ENCODE measurements at regions of chr2 and their contacts with region 1.

Region 1: GRCh38 chr2:200811336-200812121 is at the start of gene BZW1:
- DNase-seq: peak; percentile 95
- H3K4me3 ChIP-seq: peak within 1 kb of the TSS; percentile 46 to 96 (median 86)
- H3K27ac ChIP-seq: peak within 1 kb of the TSS; percentile 94
- H3K4me1 ChIP-seq: peaks cover 25% of the 10 kb centered on the region
- H3K27me3 ChIP-seq: no peaks in the 10 kb centered on the region
- CTCF ChIP-seq: no peak
- total RNA-seq, gene BZW1: 350 to 501 TPM

Region 2: GRCh38 chr2:200735061-200735460 is 76.5 kb before region 1 on chr2:
- CTCF ChIA-PET with region 1: no interaction called
- dilution Hi-C with region 1: no loop called
- in situ Hi-C with region 1: no loop called
- intact Hi-C with region 1: loop called (anchors 1 kb)
- DNase-seq: no peak
- H3K4me3 ChIP-seq: no peak overlapping the region
- H3K27ac ChIP-seq: no peak overlapping the region
- H3K4me1 ChIP-seq: peaks cover 3% of the 10 kb centered on the region
- H3K27me3 ChIP-seq: no peaks in the 10 kb centered on the region
- CTCF ChIP-seq: no peak

Region 3: GRCh38 chr2:200756618-200757321 is 54.8 kb before region 1 on chr2:
- CTCF ChIA-PET with region 1: no interaction called
- dilution Hi-C with region 1: no loop called
- in situ Hi-C with region 1: no loop called
- intact Hi-C with region 1: loop called (anchors 1 kb)
- DNase-seq: peak; percentile 93
- H3K4me3 ChIP-seq: no peak overlapping the region
- H3K27ac ChIP-seq: peak overlapping the region; percentile 58
- H3K4me1 ChIP-seq: peaks cover 53% of the 10 kb centered on the region
- H3K27me3 ChIP-seq: no peaks in the 10 kb centered on the region
- CTCF ChIP-seq: no peak

Region 4: GRCh38 chr2:200765139-200765951 is 46.2 kb before region 1 on chr2:
- CTCF ChIA-PET with region 1: no interaction called
- dilution Hi-C with region 1: no loop called
- in situ Hi-C with region 1: no loop called
- intact Hi-C with region 1: loop called (anchors 1 kb)
- DNase-seq: peak; percentile 94
- H3K4me3 ChIP-seq: no peak overlapping the region
- H3K27ac ChIP-seq: peak overlapping the region; percentile 83
- H3K4me1 ChIP-seq: peaks cover 59% of the 10 kb centered on the region
- H3K27me3 ChIP-seq: no peaks in the 10 kb centered on the region
- CTCF ChIP-seq: no peak

Region 5: GRCh38 chr2:200787348-200788120 is 24.0 kb before region 1 on chr2:
- CTCF ChIA-PET with region 1: no interaction called
- dilution Hi-C with region 1: no loop called
- in situ Hi-C with region 1: no loop called
- intact Hi-C with region 1: loop called (anchors 1 kb)
- DNase-seq: peak; percentile 96
- H3K4me3 ChIP-seq: peak overlapping the region in 1 of 3 experiments; percentile 8
- H3K27ac ChIP-seq: peak overlapping the region; percentile 94
- H3K4me1 ChIP-seq: peaks cover 44% of the 10 kb centered on the region
- H3K27me3 ChIP-seq: no peaks in the 10 kb centered on the region
- CTCF ChIP-seq: no peak

Region 6: GRCh38 chr2:200864176-200864976 is 52.8 kb after region 1 on chr2 and contains the start of gene CLK1:
- CTCF ChIA-PET with region 1: no interaction called
- dilution Hi-C with region 1: no loop called
- in situ Hi-C with region 1: no loop called
- intact Hi-C with region 1: loop called (anchors 2 kb)
- DNase-seq: peak; percentile 92
- H3K4me3 ChIP-seq: peak within 1 kb of the TSS; percentile 82 to 100 (median 99)
- H3K27ac ChIP-seq: peak within 1 kb of the TSS; percentile 99
- H3K4me1 ChIP-seq: peaks cover 22% of the 10 kb centered on the region
- H3K27me3 ChIP-seq: no peaks in the 10 kb centered on the region
- CTCF ChIP-seq: no peak
- total RNA-seq, gene CLK1: 55.0 to 55.2 TPM

Region 7: DNA sequence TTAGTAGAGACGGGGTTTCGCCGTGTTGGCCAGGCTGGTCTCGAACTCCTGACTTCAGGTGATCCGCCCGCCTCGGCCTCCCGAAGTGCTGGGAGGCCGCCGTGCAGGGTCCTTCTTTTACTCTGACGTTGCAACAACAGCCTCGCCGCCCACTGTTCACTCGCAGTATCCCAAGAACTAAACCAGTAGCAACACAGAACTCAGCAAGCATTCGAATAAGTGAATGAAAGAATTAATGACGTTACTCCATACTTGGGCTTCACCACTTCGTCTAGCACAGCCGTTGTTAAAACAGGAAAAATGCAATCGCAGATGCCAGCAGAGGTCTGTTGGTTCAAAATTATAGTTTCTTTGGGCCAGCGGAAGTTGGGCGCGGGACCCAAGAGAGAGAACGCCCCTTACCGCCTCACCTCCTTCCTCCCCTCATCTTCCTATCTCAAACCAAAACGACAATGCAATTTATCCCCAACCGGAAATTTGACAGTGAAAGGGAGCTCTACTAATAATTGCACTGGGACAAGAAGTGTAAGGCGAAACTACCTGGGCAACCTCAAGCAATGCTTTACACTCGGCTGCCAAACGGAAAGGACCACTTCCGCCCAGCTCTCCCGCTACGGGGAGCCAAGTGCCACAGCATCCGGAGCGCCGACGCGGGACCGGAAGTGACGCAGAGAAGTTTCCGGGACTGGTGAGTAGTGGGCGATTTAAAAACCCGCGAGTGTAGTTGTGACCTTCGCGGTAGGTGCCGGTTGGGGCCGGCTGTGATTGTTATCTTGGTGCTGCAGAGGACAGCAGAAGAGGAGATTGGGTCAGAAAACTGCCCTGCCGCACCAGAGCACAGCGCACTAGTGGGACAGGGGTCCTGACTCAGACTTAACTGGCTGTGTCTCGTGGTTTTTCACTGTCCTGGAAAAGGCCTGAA is 77.4 kb after region 1 on chr2 and contains the starts of genes NIF3L1 and PPIL3:
- CTCF ChIA-PET with region 1: no interaction called
- dilution Hi-C with region 1: no loop called
- in situ Hi-C with region 1: no loop called
- intact Hi-C with region 1: loop called (anchors 1 kb)
- DNase-seq: peak; percentile 98
- H3K4me3 ChIP-seq: peak within 1 kb of the TSS; percentile 77 to 97 (median 85)
- H3K27ac ChIP-seq: peak within 1 kb of the TSS; percentile 92
- H3K4me1 ChIP-seq: peaks cover 5% of the 10 kb centered on the region
- H3K27me3 ChIP-seq: no peaks in the 10 kb centered on the region
- CTCF ChIP-seq: no peak
- total RNA-seq, gene NIF3L1: 18.0 to 23.2 TPM
- total RNA-seq, gene PPIL3: 18.5 to 45.1 TPM

Region 8: GRCh38 chr2:201130524-201131186 is 319.1 kb after region 1 on chr2:
- CTCF ChIA-PET with region 1: no interaction called
- dilution Hi-C with region 1: no loop called
- in situ Hi-C with region 1: no loop called
- intact Hi-C with region 1: no loop called
- DNase-seq: peak; percentile 96
- H3K4me3 ChIP-seq: no peak overlapping the region
- H3K27ac ChIP-seq: peak overlapping the region; percentile 84
- H3K4me1 ChIP-seq: peaks cover 61% of the 10 kb centered on the region
- H3K27me3 ChIP-seq: no peaks in the 10 kb centered on the region
- CTCF ChIP-seq: no peak

Measured in mammary epithelial cell (primary cell).